ENCODE measurements at regions of chr14 and their contacts with region 1.

Region 1: GRCh38 chr14:101707068-101707842 is 54.3 kb upstream of the PPP2R5C start:
- DNase-seq: peak in 1 of 2 donors; percentile 94
- ATAC-seq: peak; percentile 69 to 86 (median 71)
- H3K4me3 ChIP-seq: no peak overlapping the region
- H3K4me3 Mint-ChIP-seq: peak overlapping the region; percentile 57
- H3K27ac ChIP-seq: peak overlapping the region; percentile 75
- H3K27ac Mint-ChIP-seq: peak overlapping the region; percentile 90
- H3K4me1 ChIP-seq: peaks cover 55% of the 10 kb centered on the region
- H3K4me1 Mint-ChIP-seq: peaks cover 46 to 67% of the 10 kb centered on the region in 2 donors
- H3K27me3 ChIP-seq: no peaks in the 10 kb centered on the region
- H3K27me3 Mint-ChIP-seq: peaks cover 2 to 9% of the 10 kb centered on the region in 2 donors
- CTCF ChIP-seq: peak; percentile 86

Region 2: DNA sequence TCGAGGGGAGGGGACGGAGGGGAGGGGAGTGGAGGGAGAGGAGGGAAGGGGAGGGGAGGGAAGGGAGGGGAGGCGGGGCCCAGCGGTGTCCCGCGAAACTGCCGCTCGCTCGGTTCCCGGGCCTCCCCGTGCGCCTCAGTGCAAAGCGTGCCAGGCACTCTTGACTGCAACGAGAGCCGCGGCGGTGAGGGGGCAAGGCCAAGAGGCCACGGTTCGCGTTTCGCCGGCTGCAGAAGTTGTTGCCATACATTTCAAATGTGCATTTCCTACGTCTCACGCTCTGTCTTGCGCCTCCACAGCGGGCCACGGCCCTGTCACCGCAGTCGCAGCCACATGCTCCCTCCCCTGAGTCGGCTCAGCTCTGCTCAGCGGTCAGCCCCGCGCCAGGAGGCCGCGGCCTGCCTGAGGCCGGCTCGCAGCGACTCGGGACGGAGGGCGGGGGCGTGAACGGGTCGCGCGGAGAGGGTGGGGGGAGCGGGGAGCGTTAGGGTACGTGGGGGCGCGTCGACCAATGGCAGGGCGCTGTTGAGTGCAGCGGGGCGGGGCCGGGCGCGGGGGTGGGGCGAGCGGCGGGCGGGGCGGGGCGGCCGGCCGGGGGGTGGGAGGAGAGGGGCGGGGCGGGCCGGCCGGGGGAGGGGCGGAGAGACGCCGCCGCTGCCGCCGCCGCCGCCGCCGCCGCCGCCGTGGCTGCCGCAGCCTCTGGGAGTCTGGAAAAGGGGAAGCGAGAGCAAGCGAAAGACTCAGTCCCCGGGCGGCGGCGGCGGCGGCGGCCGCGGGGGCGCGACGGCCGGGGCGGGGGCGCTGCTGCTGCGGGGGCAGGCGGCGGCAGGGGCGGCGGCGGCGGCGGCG is 54.0 kb after region 1 on chr14 and contains the start of gene PPP2R5C:
- intact Hi-C with region 1: loop called (anchors 2 kb)
- DNase-seq: peak; percentile 81 to 93
- ATAC-seq: peak; percentile 63 to 82 (median 71)
- H3K4me3 ChIP-seq: peak within 1 kb of the TSS; percentile 97
- H3K4me3 Mint-ChIP-seq: peak within 1 kb of the TSS; percentile 94
- H3K27ac ChIP-seq: peak within 1 kb of the TSS; percentile 96
- H3K27ac Mint-ChIP-seq: peak within 1 kb of the TSS; percentile 84 to 85
- H3K4me1 ChIP-seq: peaks cover 33% of the 10 kb centered on the region
- H3K4me1 Mint-ChIP-seq: peaks cover 57 to 65% of the 10 kb centered on the region in 2 donors
- H3K27me3 ChIP-seq: no peaks in the 10 kb centered on the region
- H3K27me3 Mint-ChIP-seq: peaks cover 0 to 3% of the 10 kb centered on the region in 2 donors
- CTCF ChIP-seq: no peak
- total RNA-seq, gene PPP2R5C: 716 to 779 (median 736) TPM

Region 3: GRCh38 chr14:101876555-101876938 is 169.3 kb after region 1 on chr14:
- intact Hi-C with region 1: loop called (anchors 1 kb)
- DNase-seq: peak; percentile 58 to 91
- ATAC-seq: peak; percentile 59 to 84 (median 74)
- H3K4me3 ChIP-seq: no peak overlapping the region
- H3K4me3 Mint-ChIP-seq: peak overlapping the region; percentile 76
- H3K27ac ChIP-seq: peak overlapping the region; percentile 86
- H3K27ac Mint-ChIP-seq: peak overlapping the region; percentile 93 to 94
- H3K4me1 ChIP-seq: peaks cover 62% of the 10 kb centered on the region
- H3K4me1 Mint-ChIP-seq: peaks cover 81 to 89% of the 10 kb centered on the region in 2 donors
- H3K27me3 ChIP-seq: no peaks in the 10 kb centered on the region
- H3K27me3 Mint-ChIP-seq: no peaks in the 10 kb centered on the region
- CTCF ChIP-seq: no peak

Region 4: GRCh38 chr14:102096214-102097114 is 389.2 kb after region 1 on chr14:
- intact Hi-C with region 1: loop called (anchors 2 kb)
- DNase-seq: peak; percentile 67 to 81
- ATAC-seq: peak; percentile 50 to 83 (median 82)
- H3K4me3 ChIP-seq: no peak overlapping the region
- H3K4me3 Mint-ChIP-seq: no peak overlapping the region
- H3K27ac ChIP-seq: no peak overlapping the region
- H3K27ac Mint-ChIP-seq: no peak overlapping the region
- H3K4me1 ChIP-seq: peaks cover 3% of the 10 kb centered on the region
- H3K4me1 Mint-ChIP-seq: peaks cover 5 to 6% of the 10 kb centered on the region in 2 donors
- H3K27me3 ChIP-seq: no peaks in the 10 kb centered on the region
- H3K27me3 Mint-ChIP-seq: peaks cover 4 to 6% of the 10 kb centered on the region in 2 donors
- CTCF ChIP-seq: peak; percentile 89

Measured in natural killer cell (primary cell).